IMR-90 (cell line): ENCODE measurements at regions of chr3 and their contacts with region 1.

Region 1: DNA sequence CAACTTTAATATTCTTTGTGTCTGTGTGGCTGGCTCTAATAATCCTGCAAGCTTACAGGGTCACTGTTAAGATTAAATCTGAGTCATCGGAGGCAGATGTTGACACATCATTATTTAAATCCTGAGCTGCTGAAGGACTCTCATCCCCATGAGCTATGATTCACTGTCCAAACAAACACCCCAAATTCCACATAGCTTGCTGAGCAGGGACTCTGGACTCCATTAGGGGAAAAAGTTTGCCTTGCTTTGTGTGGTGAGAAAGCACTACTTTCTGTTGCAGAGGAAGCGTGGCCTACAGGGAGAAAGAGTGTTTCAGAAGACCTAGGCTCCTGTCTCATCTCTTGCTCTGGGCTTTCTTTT is 213.7 kb downstream of the PDCD6IP start:
- DNase-seq: peak; percentile 100
- ATAC-seq: peak; percentile 89
- H3K4me3 ChIP-seq: no peak overlapping the region
- H3K27ac ChIP-seq: peak overlapping the region; percentile 73; the same call in 1 of the 2 replicates
- H3K4me1 ChIP-seq: peaks cover 28% of the 10 kb centered on the region
- H3K27me3 ChIP-seq: no peaks in the 10 kb centered on the region
- CTCF ChIP-seq: no peak
- POLR2A ChIP-seq: no peak
- RAD21 ChIP-seq: peak; percentile 13; the same call in 1 of the 2 replicates

Region 2: GRCh38 chr3:33883538-33883950 is 128.5 kb before region 1 on chr3:
- CTCF ChIA-PET with region 1: interaction called, 6 read pairs
- POLR2A ChIA-PET with region 1: no interaction called
- dilution Hi-C with region 1: no loop called
- in situ Hi-C with region 1: no loop called
- intact Hi-C with region 1: loop called (anchors 1 kb)
- DNase-seq: peak; percentile 49
- ATAC-seq: peak; percentile 63
- H3K4me3 ChIP-seq: no peak overlapping the region
- H3K27ac ChIP-seq: no peak overlapping the region
- H3K4me1 ChIP-seq: peaks cover 3% of the 10 kb centered on the region; the same call in 1 of the 2 replicates
- H3K27me3 ChIP-seq: peaks cover 5% of the 10 kb centered on the region; the same call in 1 of the 2 replicates
- CTCF ChIP-seq: peak; percentile 86
- POLR2A ChIP-seq: no peak
- RAD21 ChIP-seq: peak; percentile 79

Region 3: GRCh38 chr3:33915791-33916546 is 96.1 kb before region 1 on chr3:
- CTCF ChIA-PET with region 1: interaction called, 7 read pairs
- POLR2A ChIA-PET with region 1: no interaction called
- dilution Hi-C with region 1: no loop called
- in situ Hi-C with region 1: no loop called
- intact Hi-C with region 1: loop called (anchors 10 kb)
- DNase-seq: peak; percentile 28
- ATAC-seq: peak; percentile 64; the same call in 1 of the 2 replicates
- H3K4me3 ChIP-seq: no peak overlapping the region
- H3K27ac ChIP-seq: no peak overlapping the region
- H3K4me1 ChIP-seq: no peaks in the 10 kb centered on the region
- H3K27me3 ChIP-seq: peaks cover 2% of the 10 kb centered on the region; the same call in 1 of the 2 replicates
- CTCF ChIP-seq: peak; percentile 45
- POLR2A ChIP-seq: no peak
- RAD21 ChIP-seq: peak; percentile 64

Region 4: DNA sequence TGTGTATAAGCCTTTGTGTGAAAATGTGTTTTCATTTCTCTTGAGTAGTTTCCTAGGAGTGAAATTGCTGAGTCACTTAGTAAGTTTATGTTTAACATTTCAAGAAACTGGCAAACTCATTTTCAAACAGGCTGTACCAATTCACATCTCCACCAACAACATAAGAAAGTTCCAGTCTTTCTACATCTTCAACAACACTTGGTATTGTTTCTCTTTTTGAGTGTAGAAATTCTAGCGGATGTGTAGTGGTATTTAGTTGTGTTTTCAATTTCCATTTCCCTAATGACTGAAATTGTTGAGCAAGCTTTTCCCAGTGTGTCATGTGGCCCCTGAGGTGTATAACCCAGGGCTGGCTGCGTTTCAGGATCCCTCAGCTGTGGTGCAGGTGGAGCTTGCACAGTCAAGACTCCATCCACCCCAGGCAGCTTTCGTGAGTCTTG is 44.9 kb after region 1 on chr3:
- CTCF ChIA-PET with region 1: no interaction called
- POLR2A ChIA-PET with region 1: no interaction called
- dilution Hi-C with region 1: no loop called
- in situ Hi-C with region 1: no loop called
- intact Hi-C with region 1: loop called (anchors 2 kb)
- DNase-seq: peak; percentile 49
- ATAC-seq: peak; percentile 70
- H3K4me3 ChIP-seq: no peak overlapping the region
- H3K27ac ChIP-seq: no peak overlapping the region
- H3K4me1 ChIP-seq: peaks cover 3% of the 10 kb centered on the region; the same call in 1 of the 2 replicates
- H3K27me3 ChIP-seq: no peaks in the 10 kb centered on the region
- CTCF ChIP-seq: no peak
- POLR2A ChIP-seq: no peak
- RAD21 ChIP-seq: no peak

Region 5: GRCh38 chr3:34646911-34647460 is 634.9 kb after region 1 on chr3:
- CTCF ChIA-PET with region 1: no interaction called
- POLR2A ChIA-PET with region 1: no interaction called
- dilution Hi-C with region 1: no loop called
- in situ Hi-C with region 1: no loop called
- intact Hi-C with region 1: no loop called
- DNase-seq: no peak
- ATAC-seq: no peak
- H3K4me3 ChIP-seq: no peak overlapping the region
- H3K27ac ChIP-seq: no peak overlapping the region
- H3K4me1 ChIP-seq: no peaks in the 10 kb centered on the region
- H3K27me3 ChIP-seq: no peaks in the 10 kb centered on the region
- CTCF ChIP-seq: no peak
- POLR2A ChIP-seq: no peak
- RAD21 ChIP-seq: no peak